ENCODE measurements at regions of chr9 and their contacts with region 1.

Region 1: GRCh38 chr9:7500521-7500920 is 299.1 kb downstream of the DMAC1 start:
- DNase-seq: no peak
- ATAC-seq: no peak
- H3K4me3 Mint-ChIP-seq: no peak overlapping the region
- H3K27ac Mint-ChIP-seq: no peak overlapping the region
- H3K4me1 Mint-ChIP-seq: no peaks in the 10 kb centered on the region
- H3K27me3 Mint-ChIP-seq: peaks cover 4% of the 10 kb centered on the region
- CTCF ChIP-seq: no peak

Region 2: DNA sequence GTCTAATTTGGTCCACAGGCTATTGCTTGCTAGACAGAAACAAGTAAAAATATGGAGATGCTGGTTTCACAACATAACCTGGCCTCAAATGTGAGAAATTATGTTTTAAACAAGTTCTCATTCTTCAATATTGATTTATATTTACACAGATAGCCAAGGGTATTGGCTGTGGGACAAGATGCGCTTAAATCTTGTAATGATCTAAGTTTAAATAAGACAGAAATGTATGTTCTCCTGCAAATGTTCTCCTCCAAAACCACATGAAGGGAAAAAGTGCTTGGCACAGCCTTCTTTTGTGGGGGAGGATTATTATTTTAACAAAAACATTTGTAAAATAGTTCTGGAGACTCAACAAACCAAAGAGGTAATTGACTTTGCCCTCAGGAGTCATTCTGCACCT is 57.0 kb before region 1 on chr9:
- CTCF ChIA-PET with region 1: no interaction called
- POLR2A ChIA-PET with region 1: no interaction called
- intact Hi-C with region 1: loop called (anchors 10 kb)
- DNase-seq: no peak
- ATAC-seq: no peak
- H3K4me3 Mint-ChIP-seq: no peak overlapping the region
- H3K27ac Mint-ChIP-seq: no peak overlapping the region
- H3K4me1 Mint-ChIP-seq: no peaks in the 10 kb centered on the region
- H3K27me3 Mint-ChIP-seq: no peaks in the 10 kb centered on the region
- CTCF ChIP-seq: no peak

Region 3: DNA sequence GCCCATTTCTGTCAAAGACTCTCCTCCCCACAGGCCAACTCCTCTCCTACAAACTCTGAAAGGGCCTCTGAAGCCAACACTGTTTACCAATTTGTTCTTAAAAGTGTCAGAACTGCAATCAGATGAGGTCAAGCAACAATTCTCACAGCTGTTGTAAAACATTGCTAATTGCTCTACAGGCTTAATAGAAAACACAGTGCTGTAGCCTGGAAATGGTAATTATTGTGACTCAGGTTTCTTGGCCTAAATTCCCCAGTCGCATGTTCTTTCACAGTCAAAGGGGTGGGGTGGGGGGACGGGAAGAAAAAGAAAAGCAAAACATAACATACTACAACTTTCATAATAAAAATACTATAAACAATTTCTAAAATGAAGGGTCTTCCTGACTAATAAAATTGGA is 44.1 kb before region 1 on chr9:
- CTCF ChIA-PET with region 1: no interaction called
- POLR2A ChIA-PET with region 1: no interaction called
- intact Hi-C with region 1: no loop called
- DNase-seq: no peak
- ATAC-seq: no peak
- H3K4me3 Mint-ChIP-seq: no peak overlapping the region
- H3K27ac Mint-ChIP-seq: no peak overlapping the region
- H3K4me1 Mint-ChIP-seq: no peaks in the 10 kb centered on the region
- H3K27me3 Mint-ChIP-seq: peaks cover 7% of the 10 kb centered on the region
- CTCF ChIP-seq: no peak

Region 4: GRCh38 chr9:7520396-7520795 is 19.9 kb after region 1 on chr9:
- CTCF ChIA-PET with region 1: no interaction called
- POLR2A ChIA-PET with region 1: no interaction called
- intact Hi-C with region 1: no loop called
- DNase-seq: no peak
- ATAC-seq: no peak
- H3K4me3 Mint-ChIP-seq: no peak overlapping the region
- H3K27ac Mint-ChIP-seq: no peak overlapping the region
- H3K4me1 Mint-ChIP-seq: no peaks in the 10 kb centered on the region
- H3K27me3 Mint-ChIP-seq: peaks cover 1% of the 10 kb centered on the region
- CTCF ChIP-seq: no peak